Heart left ventricle (tissue), 16 donors: ENCODE measurements at regions of chr22 and their contacts with region 1.

Region 1: GRCh38 chr22:44625981-44626687 is 75.9 kb upstream of the PRR5 start:
- DNase-seq: peak; percentile 58 to 87 (median 68)
- ATAC-seq: peak; percentile 68 to 78 (median 72)
- H3K4me3 ChIP-seq: no peak overlapping the region
- H3K27ac ChIP-seq: no peak overlapping the region
- H3K4me1 ChIP-seq: peaks cover 0 to 5% (median 0%) of the 10 kb centered on the region in 12 donors
- H3K27me3 ChIP-seq: peaks cover 0 to 15% (median 0%) of the 10 kb centered on the region in 9 donors
- CTCF ChIP-seq: peak; percentile 94 to 99 (median 96)
- POLR2A ChIP-seq: no peak

Region 2: DNA sequence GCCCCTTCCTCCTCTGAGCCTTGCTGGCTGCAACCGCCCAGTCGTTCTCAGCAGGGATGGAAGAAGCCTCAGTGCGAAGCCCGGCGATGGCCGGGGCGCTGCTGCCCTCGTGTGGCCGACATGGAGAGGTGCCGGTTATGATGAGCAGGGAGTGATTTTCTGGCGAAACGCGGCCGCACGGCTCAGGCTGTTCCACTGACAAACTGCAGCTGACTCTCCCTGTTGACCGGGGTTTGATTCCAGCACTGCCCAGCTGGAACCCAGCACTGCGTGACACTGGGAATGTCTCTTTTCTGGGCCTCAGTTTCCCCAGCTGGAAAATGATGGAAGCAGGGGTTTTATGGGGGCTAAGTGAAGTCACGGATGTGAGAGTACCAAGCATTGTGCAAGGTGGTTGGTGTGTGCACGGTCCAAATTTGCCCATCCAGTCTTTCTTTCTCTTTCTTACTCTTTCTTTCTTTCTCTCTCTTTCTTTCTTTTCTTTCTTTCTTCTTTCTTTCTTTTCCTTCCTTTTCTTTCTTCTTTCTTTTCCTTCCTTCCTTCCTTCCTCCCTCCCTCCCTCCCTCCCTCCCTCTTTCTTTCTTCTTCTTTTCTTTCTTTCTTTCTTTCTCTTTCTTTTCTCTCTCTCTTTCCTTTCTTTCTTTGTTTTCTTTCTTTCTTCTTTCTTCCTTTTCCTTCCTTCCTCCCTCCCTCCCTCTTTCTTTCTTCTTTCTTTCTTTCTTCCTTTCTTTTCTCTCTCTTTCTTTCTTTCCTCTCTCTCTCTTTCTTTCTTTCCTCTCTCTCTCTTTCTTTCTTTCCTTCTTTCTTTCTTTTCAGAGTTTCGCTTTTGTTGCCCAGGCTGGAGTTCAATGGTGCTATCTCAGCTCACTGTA is 1240.1 kb before region 1 on chr22:
- intact Hi-C with region 1: loop called in 8 of 10 experiments (anchors 2 to 10 kb)
- DNase-seq: peak; percentile 67 to 90 (median 76)
- ATAC-seq: peak; percentile 59 to 93 (median 92)
- H3K4me3 ChIP-seq: no peak overlapping the region
- H3K27ac ChIP-seq: no peak overlapping the region
- H3K4me1 ChIP-seq: peaks cover 0 to 7% (median 0%) of the 10 kb centered on the region in 12 donors
- H3K27me3 ChIP-seq: peaks cover 0 to 49% (median 20%) of the 10 kb centered on the region in 9 donors
- CTCF ChIP-seq: peak in 11 of 12 donors; percentile 78 to 95 (median 91)
- POLR2A ChIP-seq: no peak

Region 3: DNA sequence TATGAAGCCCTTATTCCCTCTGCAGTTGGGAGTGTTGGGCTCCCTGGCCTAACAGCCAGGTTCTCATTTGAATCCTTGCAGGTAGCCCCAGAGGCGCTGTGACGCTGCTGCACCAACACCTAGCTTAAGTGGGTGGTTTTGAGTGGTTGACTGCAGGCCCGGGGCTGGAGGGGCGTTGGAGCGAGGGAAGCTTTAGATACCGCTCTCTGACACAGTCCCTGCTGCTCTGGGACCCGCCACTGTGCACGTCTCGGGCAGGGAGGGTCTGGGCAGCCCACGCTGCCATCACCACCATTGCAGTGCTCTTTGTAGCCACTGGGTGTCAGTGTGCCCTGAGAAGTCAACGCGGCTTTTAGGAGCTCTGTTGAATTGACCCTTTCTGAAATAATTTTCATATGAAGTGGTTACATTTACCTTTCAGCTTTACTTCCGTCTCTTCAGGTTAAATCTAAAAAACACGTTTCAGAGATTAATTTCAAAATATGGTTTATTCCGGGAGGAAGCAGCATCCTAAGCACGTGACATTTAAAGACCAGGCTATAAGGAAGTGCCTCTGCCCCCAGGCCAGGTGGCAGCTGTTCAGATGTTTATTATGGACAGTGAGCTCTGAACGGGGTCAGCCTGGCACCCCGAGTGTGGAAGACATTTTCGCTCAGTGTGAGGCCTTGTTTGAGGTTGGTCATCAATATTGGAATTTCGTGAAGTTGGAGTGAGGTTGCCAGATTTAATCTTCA is 632.9 kb before region 1 on chr22:
- intact Hi-C with region 1: loop called (anchors 1 to 2 kb)
- DNase-seq: peak; percentile 38 to 73 (median 56)
- ATAC-seq: peak in 3 of 4 donors; percentile 62 to 77 (median 70)
- H3K4me3 ChIP-seq: no peak overlapping the region
- H3K27ac ChIP-seq: peak overlapping the region in 1 of 12 donors; percentile 61
- H3K4me1 ChIP-seq: peaks cover 0 to 31% (median 9%) of the 10 kb centered on the region in 12 donors
- H3K27me3 ChIP-seq: no peaks in the 10 kb centered on the region
- CTCF ChIP-seq: peak; percentile 90 to 98 (median 96)
- POLR2A ChIP-seq: no peak

Region 4: GRCh38 chr22:44091021-44091721 is 535.0 kb before region 1 on chr22:
- intact Hi-C with region 1: loop called in 4 of 10 experiments (anchors 2 to 10 kb)
- DNase-seq: peak in 2 of 5 donors; percentile 4 to 11
- ATAC-seq: no peak
- H3K4me3 ChIP-seq: no peak overlapping the region
- H3K27ac ChIP-seq: no peak overlapping the region
- H3K4me1 ChIP-seq: peaks cover 0 to 34% (median 7%) of the 10 kb centered on the region in 12 donors
- H3K27me3 ChIP-seq: no peaks in the 10 kb centered on the region
- CTCF ChIP-seq: peak in 2 of 12 donors; percentile 7 to 10
- POLR2A ChIP-seq: no peak

Region 5: DNA sequence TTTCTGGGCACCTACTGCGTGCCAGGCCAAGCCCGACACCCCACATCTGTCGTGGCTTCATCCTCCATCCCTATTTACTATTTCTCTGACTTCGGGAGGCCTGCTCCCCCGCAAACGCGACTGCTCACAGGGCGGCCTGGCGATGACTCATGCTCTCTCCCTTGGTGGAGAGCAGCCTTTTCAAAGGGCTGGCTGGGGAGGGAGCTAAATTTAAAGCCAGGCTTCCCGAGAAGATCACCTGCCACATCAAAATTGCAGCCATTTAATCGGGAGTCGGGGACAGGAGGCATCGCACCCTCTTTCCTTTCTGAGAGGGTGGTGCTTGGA is 288.5 kb before region 1 on chr22:
- intact Hi-C with region 1: loop called in 1 of 10 experiments (anchors 10 kb)
- DNase-seq: peak in 2 of 5 donors; percentile 51 to 74
- ATAC-seq: peak in 3 of 4 donors; percentile 31 to 74 (median 59)
- H3K4me3 ChIP-seq: no peak overlapping the region
- H3K27ac ChIP-seq: peak overlapping the region in 1 of 12 donors; percentile 9
- H3K4me1 ChIP-seq: peaks cover 0 to 20% (median 4%) of the 10 kb centered on the region in 12 donors
- H3K27me3 ChIP-seq: peaks cover 0 to 12% (median 3%) of the 10 kb centered on the region in 9 donors
- CTCF ChIP-seq: no peak
- POLR2A ChIP-seq: no peak